ENCODE measurements at regions of chr1 and their contacts with region 1.

Region 1: GRCh38 chr1:180912801-180913565 is at the start of gene KIAA1614:
- ATAC-seq: peak; percentile 68 to 84 (median 79)
- H3K4me3 ChIP-seq: peak within 1 kb of the TSS; percentile 12 to 28 (median 22)
- H3K27ac ChIP-seq: no peak within 1 kb of the TSS
- H3K4me1 ChIP-seq: peaks cover 7 to 8% of the 10 kb centered on the region in 2 donors
- total RNA-seq, gene KIAA1614: 0.36 to 2.6 (median 1.2) TPM

Region 2: DNA sequence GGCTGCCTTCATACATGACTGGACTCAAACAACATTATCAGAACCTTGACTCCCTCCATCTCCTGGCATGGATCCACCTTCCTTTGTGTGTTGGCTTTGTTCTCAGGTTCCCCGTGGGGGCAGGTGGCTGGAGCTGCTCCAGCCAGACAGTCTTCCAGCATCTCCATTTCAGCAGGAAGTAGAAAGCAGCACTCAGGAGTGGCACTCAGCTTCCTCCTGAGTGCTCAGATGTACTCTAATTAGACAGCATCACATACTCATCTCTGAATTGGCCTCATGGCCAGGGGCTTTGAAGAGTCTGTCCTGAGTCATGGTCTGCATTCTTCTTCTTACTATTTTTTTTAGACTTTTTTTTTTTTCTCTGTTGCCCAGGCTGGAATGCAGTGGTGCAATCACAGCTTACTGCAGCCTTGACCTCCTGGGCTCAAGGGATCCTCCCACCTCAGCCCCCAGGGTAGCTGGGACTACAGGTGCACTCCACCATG is 326.3 kb before region 1 on chr1:
- in situ Hi-C with region 1: no loop called
- ATAC-seq: peak in 5 of 8 experiments; percentile 87 to 99 (median 93)
- H3K4me3 ChIP-seq: no peak overlapping the region
- H3K27ac ChIP-seq: no peak overlapping the region
- H3K4me1 ChIP-seq: peaks cover 0 to 2% of the 10 kb centered on the region in 2 donors

Region 3: DNA sequence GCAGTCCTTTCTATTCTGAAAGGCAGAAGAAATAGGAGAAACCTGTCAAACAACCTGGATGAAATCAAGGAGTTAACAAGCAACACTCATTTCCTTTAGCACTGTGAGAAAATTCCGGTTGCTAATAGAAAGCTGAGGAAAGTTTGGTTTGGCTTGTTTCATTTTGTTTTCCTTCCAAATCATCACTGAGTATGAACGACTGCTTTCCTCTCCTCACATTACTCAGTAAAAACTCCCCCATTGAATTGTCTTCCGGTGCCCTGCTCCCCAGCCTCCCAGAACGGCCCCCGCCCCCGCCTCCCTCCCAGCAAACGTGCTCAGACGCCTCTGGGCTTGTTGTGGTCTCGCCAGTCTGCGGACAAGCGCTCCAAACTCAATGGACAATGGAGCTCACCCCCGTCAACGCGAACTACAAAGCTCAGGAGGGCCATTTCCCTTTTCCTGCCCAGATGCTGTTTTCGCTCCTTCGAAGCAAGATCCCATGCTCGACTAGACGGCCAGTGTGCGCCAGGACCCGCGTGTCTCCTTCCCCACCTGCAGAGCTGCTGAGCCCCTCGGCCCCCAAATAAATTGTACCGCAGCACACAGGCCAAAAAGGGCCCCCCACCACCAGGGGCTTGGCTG is 108.9 kb after region 1 on chr1:
- in situ Hi-C with region 1: loop called in 1 of 9 experiments (anchors 25 kb)
- ATAC-seq: peak; percentile 7 to 36 (median 19)
- H3K4me3 ChIP-seq: peak overlapping the region; percentile 55 to 90 (median 75)
- H3K27ac ChIP-seq: peak overlapping the region; percentile 74 to 80
- H3K4me1 ChIP-seq: peaks cover 6 to 13% of the 10 kb centered on the region in 2 donors

Region 4: GRCh38 chr1:181142096-181142958 is 229.3 kb after region 1 on chr1:
- in situ Hi-C with region 1: loop called in 2 of 9 experiments (anchors 25 kb)
- ATAC-seq: peak; percentile 78 to 100 (median 97)
- H3K4me3 ChIP-seq: peak overlapping the region in 4 of 5 donors; percentile 0 to 16 (median 4)
- H3K27ac ChIP-seq: peak overlapping the region; percentile 39 to 65
- H3K4me1 ChIP-seq: peaks cover 12 to 17% of the 10 kb centered on the region in 2 donors